Endothelial cell of umbilical vein (primary cell): ENCODE measurements at regions of chr4 and their contacts with region 1.

Region 1: GRCh38 chr4:126627255-126627654 is 1005.5 kb upstream of the INTU start:
- DNase-seq: peak; percentile 44
- H3K4me3 ChIP-seq: no peak overlapping the region
- H3K27ac ChIP-seq: no peak overlapping the region
- H3K4me1 ChIP-seq: no peaks in the 10 kb centered on the region
- H3K27me3 ChIP-seq: no peaks in the 10 kb centered on the region
- CTCF ChIP-seq: peak; percentile 38 to 53
- POLR2A ChIP-seq: no peak

Region 2: GRCh38 chr4:126560794-126561193 is 66.5 kb before region 1 on chr4:
- CTCF ChIA-PET with region 1: no interaction called
- POLR2A ChIA-PET with region 1: no interaction called
- dilution Hi-C with region 1: no loop called
- intact Hi-C with region 1: no loop called
- DNase-seq: no peak
- H3K4me3 ChIP-seq: no peak overlapping the region
- H3K27ac ChIP-seq: no peak overlapping the region
- H3K4me1 ChIP-seq: no peaks in the 10 kb centered on the region
- H3K27me3 ChIP-seq: no peaks in the 10 kb centered on the region
- CTCF ChIP-seq: no peak
- POLR2A ChIP-seq: no peak

Region 3: DNA sequence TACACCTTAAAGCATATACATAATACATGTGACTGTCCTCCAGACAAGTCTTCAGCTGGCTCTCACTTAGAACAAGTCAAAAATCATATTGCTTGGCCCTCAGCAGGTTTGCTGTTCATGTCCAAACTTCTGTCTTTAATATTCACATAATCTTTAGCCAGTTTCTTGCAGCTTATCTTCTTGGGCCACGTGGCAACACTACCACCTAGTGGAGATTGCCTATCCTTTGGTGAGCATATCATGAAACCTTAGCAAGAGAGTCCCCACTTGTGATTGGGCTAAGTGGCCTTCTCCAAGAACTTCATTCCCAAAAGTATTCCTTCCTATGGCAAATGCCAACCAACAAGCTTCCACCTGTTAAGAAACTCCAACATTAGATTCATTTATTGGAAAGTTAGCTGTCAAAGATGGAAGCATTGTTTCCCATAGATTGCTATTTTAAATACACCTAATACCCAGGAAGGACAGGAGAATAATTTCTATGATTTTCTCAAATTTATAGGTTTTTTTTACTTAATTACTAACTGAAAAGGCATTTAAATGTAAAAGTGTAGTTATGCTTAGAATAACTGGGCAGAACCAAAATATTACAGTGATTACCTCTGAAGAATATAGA is 773.6 kb after region 1 on chr4:
- CTCF ChIA-PET with region 1: interaction called, 23 read pairs
- POLR2A ChIA-PET with region 1: no interaction called
- dilution Hi-C with region 1: no loop called
- intact Hi-C with region 1: loop called (anchors 1 kb)
- DNase-seq: peak; percentile 68
- H3K4me3 ChIP-seq: no peak overlapping the region
- H3K27ac ChIP-seq: no peak overlapping the region
- H3K4me1 ChIP-seq: no peaks in the 10 kb centered on the region
- H3K27me3 ChIP-seq: no peaks in the 10 kb centered on the region
- CTCF ChIP-seq: peak; percentile 59 to 69
- POLR2A ChIP-seq: no peak

Region 4: DNA sequence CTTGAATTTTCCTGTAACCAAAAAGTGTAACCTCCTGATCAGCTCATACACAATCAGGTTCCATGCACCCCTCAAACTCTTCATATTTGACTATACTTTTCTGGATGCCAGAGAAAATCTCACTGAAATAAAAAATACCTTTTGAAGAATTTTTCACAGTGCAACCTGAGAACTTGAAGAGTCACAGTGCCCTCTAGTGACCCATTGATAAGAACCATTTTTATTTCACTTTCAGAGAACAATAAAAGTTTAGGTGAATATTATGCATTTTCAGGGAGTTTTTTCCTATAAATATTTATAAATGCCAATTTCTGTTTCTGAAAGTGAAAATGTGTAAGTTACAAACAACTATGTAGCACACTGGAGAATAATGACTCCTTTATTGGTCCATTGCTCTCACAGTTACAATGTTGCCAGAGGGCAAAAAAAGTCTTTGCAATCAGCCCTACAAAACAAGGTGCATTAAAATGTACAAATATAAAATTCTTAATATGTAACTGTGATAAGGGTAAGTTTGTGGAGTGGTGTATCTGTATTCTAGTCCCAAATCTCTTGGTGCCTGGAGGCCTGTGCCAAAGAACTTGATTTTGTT is 851.9 kb after region 1 on chr4:
- CTCF ChIA-PET with region 1: interaction called, 3 read pairs
- POLR2A ChIA-PET with region 1: no interaction called
- dilution Hi-C with region 1: no loop called
- intact Hi-C with region 1: loop called (anchors 1 kb)
- DNase-seq: peak; percentile 22
- H3K4me3 ChIP-seq: no peak overlapping the region
- H3K27ac ChIP-seq: no peak overlapping the region
- H3K4me1 ChIP-seq: no peaks in the 10 kb centered on the region
- H3K27me3 ChIP-seq: no peaks in the 10 kb centered on the region
- CTCF ChIP-seq: peak in 1 of 2 donors; percentile 16
- POLR2A ChIP-seq: no peak

Region 5: DNA sequence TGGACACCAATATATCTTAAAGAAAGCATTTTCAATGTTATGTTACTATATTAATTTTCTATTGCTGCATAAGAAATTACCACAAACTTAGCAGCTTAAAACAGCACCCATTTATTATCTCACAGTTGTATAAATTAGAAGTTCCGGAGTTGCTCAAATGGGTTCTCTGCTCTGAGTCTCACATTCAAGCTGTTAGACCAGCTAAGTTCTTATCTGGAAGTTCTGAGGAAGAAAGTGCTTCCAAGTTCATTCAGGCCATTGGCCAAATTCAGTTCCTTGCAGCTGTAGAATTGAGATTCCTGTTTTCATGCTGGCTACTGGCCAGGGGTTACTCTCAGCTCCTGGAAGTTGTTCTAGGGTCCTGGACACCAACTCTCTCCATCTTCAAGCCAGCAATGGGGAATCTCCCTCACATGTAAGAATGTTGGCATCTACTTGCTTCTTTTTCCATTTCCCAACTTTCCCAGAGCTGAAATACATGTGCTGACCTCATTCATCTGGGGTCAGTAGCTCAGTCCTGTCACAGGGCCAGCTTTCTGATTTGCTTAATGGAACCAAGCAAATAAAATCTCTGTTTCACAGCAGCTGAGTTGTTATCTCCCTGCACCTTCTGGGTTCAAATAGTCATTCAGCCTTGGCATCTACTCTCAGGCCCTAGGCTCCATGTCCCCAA is 905.9 kb after region 1 on chr4:
- CTCF ChIA-PET with region 1: no interaction called
- POLR2A ChIA-PET with region 1: no interaction called
- dilution Hi-C with region 1: no loop called
- intact Hi-C with region 1: loop called (anchors 10 kb)
- DNase-seq: peak; percentile 39
- H3K4me3 ChIP-seq: no peak overlapping the region
- H3K27ac ChIP-seq: no peak overlapping the region
- H3K4me1 ChIP-seq: no peaks in the 10 kb centered on the region
- H3K27me3 ChIP-seq: no peaks in the 10 kb centered on the region
- CTCF ChIP-seq: no peak
- POLR2A ChIP-seq: no peak